MCF 10A (cell line): ENCODE measurements at regions of chr3 and their contacts with region 1.

Region 1: DNA sequence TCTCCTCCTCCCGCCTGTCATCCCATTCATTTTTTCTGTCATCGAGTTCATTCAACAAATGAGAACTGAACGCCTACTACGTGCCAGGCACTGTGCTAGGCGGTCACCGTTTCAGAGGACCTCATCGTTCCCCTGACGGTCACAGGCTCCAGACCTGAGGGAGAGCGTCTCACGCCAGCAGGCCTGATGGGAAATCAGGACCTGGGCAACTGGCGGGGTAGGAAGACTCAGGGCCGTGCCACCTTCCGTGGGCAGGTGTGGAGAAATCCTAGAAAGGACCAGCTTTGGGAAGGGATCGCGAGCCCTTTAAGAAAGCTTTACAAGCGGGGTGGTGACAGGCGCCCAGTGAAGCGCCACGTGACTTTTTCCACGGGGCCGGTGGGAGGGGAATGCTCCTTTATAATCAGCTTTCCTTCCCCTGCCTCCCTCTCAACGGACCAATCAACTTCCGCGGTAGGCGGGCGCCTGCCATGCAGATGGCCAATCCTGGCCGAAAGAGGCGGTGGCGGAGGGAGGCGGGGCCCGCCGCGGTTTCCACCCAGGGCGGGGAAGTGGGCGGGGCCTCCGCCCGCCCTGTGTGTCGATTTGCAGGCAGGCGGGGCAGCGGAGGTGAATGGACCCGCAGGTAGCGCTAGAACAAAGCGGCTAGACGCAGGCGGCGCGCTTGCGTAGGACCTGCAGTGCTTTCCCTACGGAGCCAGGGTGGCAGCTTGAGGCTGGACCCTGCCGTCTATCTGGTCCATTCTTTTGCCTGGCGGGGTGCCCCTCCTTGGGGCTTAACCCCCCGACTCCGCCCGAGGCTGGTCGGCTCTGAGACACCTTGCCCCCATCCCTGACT is 816 bp upstream of the DUSP7 start:
- DNase-seq: peak; percentile 99
- H3K4me3 Mint-ChIP-seq: peak overlapping the region; percentile 81
- H3K27ac Mint-ChIP-seq: peak overlapping the region; percentile 50
- H3K4me1 Mint-ChIP-seq: peaks cover 42% of the 10 kb centered on the region
- H3K27me3 Mint-ChIP-seq: no peaks in the 10 kb centered on the region
- CTCF ChIP-seq: no peak

Region 2: DNA sequence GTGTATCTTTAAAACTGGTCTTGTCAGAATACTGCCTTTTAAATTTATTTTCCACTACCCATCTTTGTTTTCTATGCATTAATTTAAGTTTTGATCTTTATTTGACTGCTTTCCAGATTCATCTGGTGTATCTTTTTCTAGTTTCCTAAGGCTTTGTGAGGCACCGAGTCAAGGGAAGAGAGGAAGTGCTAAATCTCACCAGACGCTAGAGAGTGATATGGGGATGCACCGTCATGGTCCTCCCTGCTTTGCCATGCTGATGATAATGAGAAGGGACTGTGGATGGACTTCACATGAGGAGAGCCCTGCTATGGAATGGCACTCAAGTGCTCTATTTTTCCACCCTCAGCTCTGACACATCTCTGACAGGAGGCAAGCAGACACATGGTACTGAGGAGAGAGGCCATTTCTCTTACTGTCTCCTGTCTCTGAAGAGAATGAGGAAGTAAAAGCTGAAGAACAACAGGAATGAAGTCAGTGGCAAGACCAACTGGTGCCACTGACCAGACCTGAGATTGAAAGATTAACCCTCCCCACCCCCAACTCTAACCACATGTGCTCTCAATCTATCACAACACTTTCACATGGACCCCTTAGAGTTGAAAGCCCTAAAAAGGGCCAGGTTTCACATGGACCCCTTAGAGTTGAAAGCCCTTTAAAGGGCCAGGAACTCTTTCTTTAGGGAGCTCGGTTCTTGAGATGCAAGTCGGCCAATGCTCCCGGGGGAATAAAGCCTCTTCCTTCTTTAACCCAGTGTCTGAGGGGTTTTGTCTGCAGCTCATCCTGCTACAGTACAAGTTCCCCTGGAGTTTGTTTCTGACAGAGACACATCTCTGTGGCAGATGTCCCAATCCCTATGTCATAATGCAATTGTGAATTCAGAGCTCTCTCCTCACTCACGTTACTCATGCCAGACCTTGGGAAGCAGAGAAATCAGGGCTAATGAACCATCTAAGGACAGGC is 196.2 kb before region 1 on chr3 and contains the start of gene IQCF2:
- CTCF ChIA-PET with region 1: no interaction called
- POLR2A ChIA-PET with region 1: no interaction called
- intact Hi-C with region 1: no loop called
- DNase-seq: no peak
- H3K4me3 Mint-ChIP-seq: no peak within 1 kb of the TSS
- H3K27ac Mint-ChIP-seq: no peak within 1 kb of the TSS
- H3K4me1 Mint-ChIP-seq: no peaks in the 10 kb centered on the region
- H3K27me3 Mint-ChIP-seq: peaks cover 41% of the 10 kb centered on the region
- CTCF ChIP-seq: no peak
- total RNA-seq, gene IQCF2: not detected in 2 replicates

Region 3: GRCh38 chr3:51982782-51983577 is 74.2 kb before region 1 on chr3 and contains the start of gene ACY1:
- CTCF ChIA-PET with region 1: interaction called, 10 read pairs
- POLR2A ChIA-PET with region 1: interaction called, 9 read pairs
- intact Hi-C with region 1: no loop called
- DNase-seq: peak; percentile 87
- H3K4me3 Mint-ChIP-seq: peak within 1 kb of the TSS; percentile 87
- H3K27ac Mint-ChIP-seq: peak within 1 kb of the TSS; percentile 98
- H3K4me1 Mint-ChIP-seq: peaks cover 25% of the 10 kb centered on the region
- H3K27me3 Mint-ChIP-seq: no peaks in the 10 kb centered on the region
- CTCF ChIP-seq: no peak
- total RNA-seq, gene ACY1: 109 and 164 TPM in 2 replicates

Region 4: DNA sequence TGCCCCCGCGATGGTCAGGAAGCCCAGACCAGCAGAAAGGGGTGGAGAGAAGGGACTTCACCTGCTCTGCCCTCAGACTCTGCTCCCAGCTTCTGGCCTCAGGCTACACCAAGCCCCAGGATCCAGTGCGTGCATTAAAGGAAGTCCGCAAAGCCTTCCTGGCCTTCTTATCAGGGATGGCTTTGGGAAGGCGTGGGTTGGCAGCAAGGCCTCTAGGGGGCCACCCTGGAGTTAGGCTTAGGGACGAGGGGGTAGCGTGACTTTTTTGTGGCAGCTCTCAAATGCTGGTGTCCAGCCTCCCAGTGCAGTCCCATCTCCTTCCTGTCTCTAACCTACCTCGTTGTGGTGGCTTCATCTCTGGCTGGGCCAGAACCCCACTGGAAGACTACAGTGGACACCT is 42.6 kb before region 1 on chr3:
- CTCF ChIA-PET with region 1: interaction called, 15 read pairs
- POLR2A ChIA-PET with region 1: interaction called, 4 read pairs
- intact Hi-C with region 1: no loop called
- DNase-seq: no peak
- H3K4me3 Mint-ChIP-seq: no peak overlapping the region
- H3K27ac Mint-ChIP-seq: no peak overlapping the region
- H3K4me1 Mint-ChIP-seq: no peaks in the 10 kb centered on the region
- H3K27me3 Mint-ChIP-seq: no peaks in the 10 kb centered on the region
- CTCF ChIP-seq: no peak

Region 5: DNA sequence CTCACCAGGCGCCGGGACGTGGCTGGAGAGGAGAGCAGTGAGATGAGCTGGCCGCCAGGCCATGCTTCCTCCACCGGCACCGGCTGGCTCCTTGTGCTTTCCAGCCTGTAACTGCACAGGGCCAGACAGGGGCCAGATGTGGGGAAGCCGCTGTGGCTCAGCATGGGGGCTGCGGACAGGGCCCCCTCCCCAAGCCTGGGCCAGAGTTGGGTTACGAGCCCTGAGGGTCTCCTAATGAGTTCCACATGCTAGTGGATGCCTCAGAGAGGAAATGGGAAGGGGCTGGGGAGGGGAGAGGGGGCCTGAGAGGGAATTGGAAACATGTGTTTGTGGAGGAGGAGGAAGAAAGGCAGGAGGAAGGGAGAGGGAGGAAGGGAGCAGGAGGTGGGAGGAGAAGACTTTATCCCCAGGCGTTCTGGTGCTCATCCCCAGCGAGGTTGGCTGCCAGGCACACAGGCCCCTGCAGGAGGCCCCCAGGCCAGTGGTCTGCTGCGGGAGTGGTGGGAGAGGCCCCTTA is 10.9 kb after region 1 on chr3:
- CTCF ChIA-PET with region 1: interaction called, 8 read pairs
- POLR2A ChIA-PET with region 1: interaction called, 31 read pairs
- intact Hi-C with region 1: no loop called
- DNase-seq: no peak
- H3K4me3 Mint-ChIP-seq: no peak overlapping the region
- H3K27ac Mint-ChIP-seq: no peak overlapping the region
- H3K4me1 Mint-ChIP-seq: peaks cover 17% of the 10 kb centered on the region
- H3K27me3 Mint-ChIP-seq: no peaks in the 10 kb centered on the region
- CTCF ChIP-seq: no peak

Region 6: DNA sequence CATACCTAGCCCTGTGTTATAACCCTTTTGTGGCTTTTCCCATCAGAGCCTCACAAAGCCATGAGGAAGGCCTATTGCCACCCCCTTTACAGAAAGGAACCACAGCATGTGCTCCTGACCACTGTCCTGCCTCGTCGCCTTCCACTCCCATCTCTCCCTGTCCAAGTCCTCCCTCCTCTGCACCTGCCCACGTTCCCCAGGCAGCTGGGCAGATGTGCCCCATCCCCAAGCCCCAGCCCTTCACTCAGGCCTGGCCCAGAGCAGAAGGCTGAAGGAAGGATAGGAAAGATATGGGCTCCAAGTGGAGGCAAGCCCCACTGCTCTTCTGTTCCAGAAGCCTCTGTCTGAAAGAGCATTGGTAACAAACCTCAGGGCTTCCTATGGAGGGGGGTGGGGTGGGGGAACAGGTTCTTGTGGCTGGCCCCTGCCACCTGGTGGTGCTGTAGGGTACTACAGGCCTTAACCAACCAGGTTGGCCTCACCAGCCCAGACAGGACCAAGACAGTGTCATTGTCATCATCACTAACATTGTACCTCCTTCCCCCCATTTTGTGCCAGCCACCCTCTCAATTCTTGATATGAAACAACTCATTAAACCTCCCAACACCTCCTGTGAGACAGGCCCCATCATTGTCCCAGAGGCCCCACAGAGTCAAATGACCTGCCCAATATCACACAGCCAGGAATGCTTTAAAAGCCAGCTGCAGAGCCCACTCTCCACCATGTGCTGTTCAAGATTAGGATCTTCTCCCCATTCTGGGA is 87.0 kb after region 1 on chr3:
- CTCF ChIA-PET with region 1: interaction called, 38 read pairs
- POLR2A ChIA-PET with region 1: interaction called, 7 read pairs
- intact Hi-C with region 1: loop called (anchors 1 kb)
- DNase-seq: peak; percentile 79
- H3K4me3 Mint-ChIP-seq: no peak overlapping the region
- H3K27ac Mint-ChIP-seq: peak overlapping the region; percentile 31
- H3K4me1 Mint-ChIP-seq: no peaks in the 10 kb centered on the region
- H3K27me3 Mint-ChIP-seq: no peaks in the 10 kb centered on the region
- CTCF ChIP-seq: peak; percentile 89